ENCODE measurements at regions of chr1 and their contacts with region 1.

Region 1: GRCh38 chr1:9275567-9276034 is 17.1 kb upstream of the SPSB1 start:
- DNase-seq: peak; percentile 93
- ATAC-seq: peak; percentile 89
- H3K4me3 Mint-ChIP-seq: peak overlapping the region; percentile 2
- H3K27ac Mint-ChIP-seq: peak overlapping the region; percentile 47
- H3K4me1 Mint-ChIP-seq: peaks cover 33% of the 10 kb centered on the region
- H3K27me3 Mint-ChIP-seq: no peaks in the 10 kb centered on the region

Region 2: DNA sequence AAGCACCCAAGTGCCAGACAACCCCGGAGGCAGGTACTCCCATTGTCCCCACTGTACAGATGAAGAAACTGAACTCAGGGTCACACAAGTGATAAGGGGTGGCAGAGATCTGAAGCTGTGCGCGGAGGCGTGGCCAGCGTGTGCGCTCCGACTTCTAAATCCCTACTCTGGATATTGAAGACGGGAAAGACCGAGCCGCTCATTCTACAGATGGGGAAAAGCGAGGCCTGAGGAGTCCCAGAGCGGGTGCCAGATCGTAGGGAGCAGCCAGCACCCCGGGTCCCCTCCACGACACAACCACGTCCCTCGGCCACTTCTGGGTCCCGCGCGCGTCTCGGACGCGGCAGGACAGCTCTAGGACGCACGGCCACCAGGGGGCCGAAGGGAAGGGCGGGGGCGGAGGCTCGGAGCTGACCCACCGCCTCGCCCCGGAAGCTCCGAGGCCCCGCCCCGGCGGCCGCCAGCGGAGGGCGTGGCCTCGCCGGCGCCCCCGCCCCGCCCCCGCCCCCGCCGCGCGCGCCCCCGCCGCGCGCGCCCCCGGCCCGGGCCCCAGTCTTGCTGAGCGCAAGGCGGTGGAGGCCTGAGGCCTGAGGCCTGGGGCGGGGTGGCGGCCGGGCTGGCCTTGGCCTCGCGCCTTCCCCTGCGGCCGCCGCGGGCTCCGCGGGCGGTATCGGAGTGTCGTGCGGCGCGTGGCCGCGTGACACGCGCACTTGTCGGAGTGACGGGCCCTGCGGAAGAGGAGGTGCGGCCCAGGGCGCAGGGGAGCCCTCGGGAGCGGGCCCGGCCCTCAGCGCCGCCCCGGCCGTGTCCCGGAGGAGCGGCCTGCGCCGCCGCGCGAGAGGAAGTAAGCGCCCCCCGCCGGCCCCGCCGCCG is 41.1 kb before region 1 on chr1 and contains the start of gene H6PD:
- CTCF ChIA-PET with region 1: no interaction called
- POLR2A ChIA-PET with region 1: no interaction called
- intact Hi-C with region 1: loop called in 1 of 2 experiments (anchors 2 kb)
- DNase-seq: peak; percentile 80
- ATAC-seq: peak; percentile 76
- H3K4me3 Mint-ChIP-seq: peak within 1 kb of the TSS; percentile 82
- H3K27ac Mint-ChIP-seq: peak within 1 kb of the TSS; percentile 90
- H3K4me1 Mint-ChIP-seq: peaks cover 41% of the 10 kb centered on the region
- H3K27me3 Mint-ChIP-seq: no peaks in the 10 kb centered on the region
- total RNA-seq, gene H6PD: 8.8 to 9.6 TPM

Region 3: DNA sequence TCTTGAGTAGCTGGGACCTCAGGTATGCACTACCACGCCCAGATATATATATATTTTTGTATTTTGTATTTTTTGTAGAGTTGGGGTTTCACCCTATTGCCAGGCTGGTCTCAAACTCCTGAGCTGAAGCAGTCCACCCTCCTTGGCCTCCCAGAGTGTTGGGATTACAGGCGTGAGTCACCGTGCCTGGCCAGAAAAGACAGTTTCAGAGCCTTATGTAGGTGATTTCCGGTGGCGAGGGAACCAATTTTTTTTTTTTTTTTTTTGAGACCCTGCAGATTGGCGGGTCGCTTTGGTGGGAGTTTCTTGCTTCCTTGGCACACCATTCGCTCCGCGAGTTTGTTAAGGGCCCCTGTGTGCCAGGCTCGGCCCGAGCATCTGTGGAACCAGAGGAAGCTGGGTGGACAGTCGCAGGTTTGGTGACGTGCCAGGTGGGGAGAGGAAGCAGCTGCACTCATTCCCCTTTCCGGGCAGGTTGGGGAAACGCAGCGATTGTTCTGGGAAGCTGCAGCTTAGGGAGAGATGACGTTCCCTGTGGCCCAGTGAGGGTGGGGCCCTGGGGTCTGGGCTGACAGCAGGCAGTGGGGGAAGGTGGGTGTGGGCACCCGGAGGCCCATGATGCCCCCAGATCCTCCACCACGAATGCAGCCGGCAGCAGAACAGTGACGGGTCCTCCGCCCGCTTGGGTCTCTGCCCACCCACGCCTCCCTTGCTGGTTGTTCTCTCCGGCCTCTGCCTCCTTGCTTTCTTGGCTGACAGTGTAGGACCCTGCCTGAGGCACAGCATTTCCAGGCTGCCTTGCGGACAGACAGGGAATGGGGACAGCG is 42.2 kb after region 1 on chr1:
- CTCF ChIA-PET with region 1: no interaction called
- POLR2A ChIA-PET with region 1: no interaction called
- intact Hi-C with region 1: loop called in 1 of 2 experiments (anchors 1 kb)
- DNase-seq: peak; percentile 42
- ATAC-seq: no peak
- H3K4me3 Mint-ChIP-seq: peak overlapping the region; percentile 18
- H3K27ac Mint-ChIP-seq: peak overlapping the region; percentile 42
- H3K4me1 Mint-ChIP-seq: peaks cover 38% of the 10 kb centered on the region
- H3K27me3 Mint-ChIP-seq: no peaks in the 10 kb centered on the region

Region 4: GRCh38 chr1:9413148-9413876 is 137.7 kb after region 1 on chr1:
- CTCF ChIA-PET with region 1: no interaction called
- POLR2A ChIA-PET with region 1: no interaction called
- intact Hi-C with region 1: loop called in 1 of 2 experiments (anchors 1 kb)
- DNase-seq: peak; percentile 90
- ATAC-seq: peak; percentile 89
- H3K4me3 Mint-ChIP-seq: no peak overlapping the region
- H3K27ac Mint-ChIP-seq: peak overlapping the region; percentile 55
- H3K4me1 Mint-ChIP-seq: peaks cover 50% of the 10 kb centered on the region
- H3K27me3 Mint-ChIP-seq: peaks cover 3% of the 10 kb centered on the region